ENCODE measurements at regions of chr18 and their contacts with region 1.

Region 1: DNA sequence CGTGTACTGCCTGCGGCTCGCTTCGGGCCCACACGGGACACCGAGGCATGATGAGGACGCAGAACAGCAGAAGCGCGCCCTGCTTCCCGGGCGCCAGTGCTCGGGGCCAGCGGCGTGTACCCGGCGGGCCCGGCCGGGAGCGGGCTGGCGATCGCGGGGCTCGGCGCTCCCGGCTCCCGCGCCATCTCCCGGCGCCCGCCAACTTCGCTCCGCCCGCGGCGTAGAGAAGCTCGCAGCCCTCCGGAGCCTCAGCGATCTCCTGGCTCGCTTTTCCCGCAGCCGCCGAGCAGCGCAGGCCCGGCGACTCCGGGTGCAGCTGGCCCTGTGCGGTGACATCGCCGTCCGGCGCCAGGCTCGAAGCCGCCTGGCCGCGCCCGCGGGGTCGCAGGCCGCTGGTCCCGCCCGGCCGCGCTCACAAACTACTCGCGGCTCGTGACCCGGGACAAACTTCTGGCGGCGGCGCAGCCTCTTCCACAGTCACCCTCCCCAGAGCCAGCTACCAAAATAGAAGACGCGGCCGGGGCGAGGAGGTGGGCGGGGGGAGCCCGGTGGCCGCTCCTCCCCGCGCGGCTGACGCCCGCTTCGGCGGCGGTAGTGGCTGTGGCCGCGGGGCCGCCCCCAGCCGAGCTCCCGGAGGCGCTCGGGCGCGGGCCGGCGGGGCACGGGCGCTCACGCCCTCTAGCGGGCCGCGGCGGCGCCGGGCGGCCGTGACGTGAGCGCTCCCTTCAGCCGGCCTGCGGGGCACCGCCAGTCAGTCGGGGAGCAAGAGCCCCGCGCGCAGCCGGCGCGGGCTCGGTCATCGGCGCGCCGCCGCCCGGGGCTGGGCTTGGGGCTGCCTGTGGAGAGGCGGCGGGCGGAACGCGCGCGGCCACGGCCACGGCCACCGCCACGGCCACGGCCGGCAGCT is at the start of gene PTPRM:
- DNase-seq: peak; percentile 93 to 94
- ATAC-seq: peak; percentile 88 to 94 (median 92)
- H3K4me3 ChIP-seq: peak within 1 kb of the TSS; percentile 76 to 95 (median 88)
- H3K27ac ChIP-seq: peak within 1 kb of the TSS; percentile 95 to 100 (median 98)
- H3K4me1 ChIP-seq: peaks cover 0 to 64% (median 34%) of the 10 kb centered on the region in 9 donors
- H3K27me3 ChIP-seq: peaks cover 0 to 60% (median 0%) of the 10 kb centered on the region in 7 donors
- CTCF ChIP-seq: peak in 8 of 9 donors; percentile 12 to 79 (median 42)
- total RNA-seq, gene PTPRM: 104 to 170 (median 145) TPM

Region 2: GRCh38 chr18:7370802-7371201 is 196.0 kb before region 1 on chr18:
- intact Hi-C with region 1: loop called in 8 of 10 experiments (anchors 1 to 10 kb)
- DNase-seq: peak; percentile 76 to 89
- ATAC-seq: peak; percentile 82 to 95 (median 91)
- H3K4me3 ChIP-seq: peak overlapping the region in 2 of 10 donors; percentile 7 to 29
- H3K27ac ChIP-seq: peak overlapping the region; percentile 53 to 94 (median 88)
- H3K4me1 ChIP-seq: peaks cover 16 to 81% (median 45%) of the 10 kb centered on the region in 9 donors
- H3K27me3 ChIP-seq: no peaks in the 10 kb centered on the region
- CTCF ChIP-seq: no peak

Region 3: DNA sequence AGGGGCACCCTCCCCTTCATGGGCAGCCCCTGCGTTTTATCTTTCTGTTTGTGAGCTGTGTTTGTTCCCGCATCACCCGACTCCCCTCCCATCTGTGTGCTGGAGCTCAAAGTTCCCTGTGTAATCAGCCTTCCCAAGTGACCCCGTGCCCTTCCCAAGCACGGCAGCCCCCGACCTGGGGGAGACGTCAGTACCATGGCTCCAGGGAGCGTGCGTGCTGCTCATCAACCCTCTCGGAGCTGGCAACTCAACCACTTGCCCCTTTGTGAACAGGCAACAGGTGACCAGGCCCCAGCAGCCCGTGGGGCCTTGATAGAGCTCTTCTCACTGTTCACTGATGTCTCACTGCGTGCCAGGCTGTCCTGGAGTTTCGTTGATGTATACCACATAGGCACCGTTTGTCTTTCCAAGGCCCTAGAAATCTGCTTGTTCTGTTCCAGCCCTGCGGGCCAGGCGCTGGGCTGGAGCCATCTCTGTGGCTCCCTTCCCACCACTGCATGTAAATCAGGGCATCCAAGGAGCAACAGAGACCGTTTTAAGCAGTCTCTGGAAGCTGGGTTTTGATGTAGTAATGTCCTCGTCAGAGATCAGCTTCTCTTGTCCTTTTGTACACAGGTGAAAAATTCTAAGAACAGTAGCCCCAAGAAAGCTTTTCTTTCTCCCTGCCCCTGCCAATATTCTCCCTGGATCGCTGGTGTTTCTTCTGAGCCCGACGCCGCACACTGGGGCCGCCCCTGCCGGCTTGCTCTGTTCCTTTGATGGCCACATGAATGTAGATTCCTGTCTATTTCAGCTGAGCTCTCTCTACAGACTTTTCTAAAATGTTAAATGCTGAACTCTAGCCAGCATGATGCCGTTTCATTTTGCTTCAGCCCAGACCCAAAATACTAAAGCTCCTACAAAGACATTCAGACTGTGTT is 106.7 kb before region 1 on chr18:
- intact Hi-C with region 1: loop called in 5 of 10 experiments (anchors 2 to 10 kb)
- DNase-seq: peak in 1 of 2 donors; percentile 50
- ATAC-seq: peak in 7 of 8 donors; percentile 5 to 91 (median 40)
- H3K4me3 ChIP-seq: peak overlapping the region in 8 of 10 donors; percentile 7 to 33 (median 16)
- H3K27ac ChIP-seq: peak overlapping the region; percentile 1 to 81 (median 44)
- H3K4me1 ChIP-seq: peaks cover 0 to 44% (median 18%) of the 10 kb centered on the region in 9 donors
- H3K27me3 ChIP-seq: no peaks in the 10 kb centered on the region
- CTCF ChIP-seq: no peak

Region 4: DNA sequence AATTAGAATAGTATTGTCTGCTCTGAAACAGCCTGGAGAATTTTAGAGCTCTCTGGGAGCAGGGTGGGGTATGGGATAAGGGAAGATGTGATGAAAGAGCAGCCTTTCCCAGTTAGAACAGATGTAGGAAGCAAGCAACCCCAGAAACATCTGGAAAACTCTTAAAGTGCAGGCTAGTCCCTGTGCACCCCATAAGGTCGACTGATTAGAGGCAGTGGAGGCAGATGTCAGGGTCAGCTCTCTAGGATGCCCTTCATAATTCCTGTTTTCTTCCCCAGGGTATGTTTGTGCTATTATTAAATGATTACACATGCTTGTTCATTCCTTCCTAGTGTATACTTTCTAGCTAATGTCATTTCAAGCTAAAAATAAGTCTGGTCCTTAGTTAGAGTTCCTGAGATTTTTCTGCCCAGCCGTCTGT is 42.0 kb after region 1 on chr18:
- intact Hi-C with region 1: loop called in 3 of 10 experiments (anchors 5 kb)
- DNase-seq: peak in 1 of 2 donors; percentile 56
- ATAC-seq: peak; percentile 77 to 89 (median 84)
- H3K4me3 ChIP-seq: no peak overlapping the region
- H3K27ac ChIP-seq: peak overlapping the region; percentile 70 to 92 (median 86)
- H3K4me1 ChIP-seq: peaks cover 12 to 100% (median 82%) of the 10 kb centered on the region in 9 donors
- H3K27me3 ChIP-seq: no peaks in the 10 kb centered on the region
- CTCF ChIP-seq: no peak

Region 5: GRCh38 chr18:7676253-7676873 is 109.5 kb after region 1 on chr18:
- intact Hi-C with region 1: no loop called
- DNase-seq: no peak
- ATAC-seq: peak in 6 of 8 donors; percentile 20 to 48 (median 44)
- H3K4me3 ChIP-seq: no peak overlapping the region
- H3K27ac ChIP-seq: peak overlapping the region in 4 of 10 donors; percentile 10 to 59 (median 38)
- H3K4me1 ChIP-seq: peaks cover 6 to 95% (median 74%) of the 10 kb centered on the region in 9 donors
- H3K27me3 ChIP-seq: no peaks in the 10 kb centered on the region
- CTCF ChIP-seq: no peak

Region 6: GRCh38 chr18:7755753-7756475 is 189.1 kb after region 1 on chr18:
- intact Hi-C with region 1: loop called in 6 of 10 experiments (anchors 5 to 10 kb)
- DNase-seq: no peak
- ATAC-seq: peak in 7 of 8 donors; percentile 41 to 77 (median 63)
- H3K4me3 ChIP-seq: no peak overlapping the region
- H3K27ac ChIP-seq: peak overlapping the region in 5 of 10 donors; percentile 29 to 59 (median 51)
- H3K4me1 ChIP-seq: peaks cover 8 to 86% (median 72%) of the 10 kb centered on the region in 9 donors
- H3K27me3 ChIP-seq: no peaks in the 10 kb centered on the region
- CTCF ChIP-seq: peak; percentile 19 to 60 (median 44)

Region 7: GRCh38 chr18:8140841-8141501 is 574.2 kb after region 1 on chr18:
- intact Hi-C with region 1: loop called in 1 of 10 experiments (anchors 10 kb)
- DNase-seq: peak; percentile 26 to 30
- ATAC-seq: peak in 7 of 8 donors; percentile 44 to 91 (median 82)
- H3K4me3 ChIP-seq: no peak overlapping the region
- H3K27ac ChIP-seq: peak overlapping the region; percentile 17 to 86 (median 67)
- H3K4me1 ChIP-seq: peaks cover 17 to 63% (median 55%) of the 10 kb centered on the region in 9 donors
- H3K27me3 ChIP-seq: no peaks in the 10 kb centered on the region
- CTCF ChIP-seq: no peak

Region 8: GRCh38 chr18:8478166-8478967 is 911.5 kb after region 1 on chr18:
- intact Hi-C with region 1: loop called in 2 of 10 experiments (anchors 10 kb)
- DNase-seq: peak; percentile 54 to 64
- ATAC-seq: peak in 7 of 8 donors; percentile 43 to 74 (median 59)
- H3K4me3 ChIP-seq: no peak overlapping the region
- H3K27ac ChIP-seq: no peak overlapping the region
- H3K4me1 ChIP-seq: peaks cover 0 to 9% (median 0%) of the 10 kb centered on the region in 9 donors
- H3K27me3 ChIP-seq: no peaks in the 10 kb centered on the region
- CTCF ChIP-seq: peak; percentile 61 to 78 (median 72)

Measured in heart right ventricle (tissue), 16 donors.